ENCODE measurements at regions of chr9 and their contacts with region 1.

Region 1: GRCh38 chr9:13427587-13427986 is 148.1 kb upstream of the MPDZ start:
- DNase-seq: no peak
- ATAC-seq: no peak

Region 2: DNA sequence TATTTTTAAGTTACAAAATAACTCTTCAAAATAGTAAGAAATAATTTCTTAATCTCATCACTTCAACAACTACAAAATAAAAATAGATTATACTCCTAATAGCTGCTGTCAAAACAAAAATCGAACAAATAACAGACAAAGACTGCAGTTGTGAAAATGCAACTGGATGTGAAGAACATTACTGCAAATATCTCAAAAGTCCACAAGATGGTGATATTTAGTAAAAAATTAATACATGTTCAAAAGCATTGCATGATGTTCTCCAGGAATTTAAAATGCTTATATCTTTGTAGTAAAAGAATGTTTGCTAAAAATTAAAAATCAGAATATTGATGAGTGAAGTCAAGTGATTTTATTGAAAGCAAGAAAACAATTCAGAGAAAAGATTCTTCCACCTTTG is 214.2 kb before region 1 on chr9:
- intact Hi-C with region 1: loop called (anchors 10 kb)
- DNase-seq: no peak
- ATAC-seq: no peak

Region 3: DNA sequence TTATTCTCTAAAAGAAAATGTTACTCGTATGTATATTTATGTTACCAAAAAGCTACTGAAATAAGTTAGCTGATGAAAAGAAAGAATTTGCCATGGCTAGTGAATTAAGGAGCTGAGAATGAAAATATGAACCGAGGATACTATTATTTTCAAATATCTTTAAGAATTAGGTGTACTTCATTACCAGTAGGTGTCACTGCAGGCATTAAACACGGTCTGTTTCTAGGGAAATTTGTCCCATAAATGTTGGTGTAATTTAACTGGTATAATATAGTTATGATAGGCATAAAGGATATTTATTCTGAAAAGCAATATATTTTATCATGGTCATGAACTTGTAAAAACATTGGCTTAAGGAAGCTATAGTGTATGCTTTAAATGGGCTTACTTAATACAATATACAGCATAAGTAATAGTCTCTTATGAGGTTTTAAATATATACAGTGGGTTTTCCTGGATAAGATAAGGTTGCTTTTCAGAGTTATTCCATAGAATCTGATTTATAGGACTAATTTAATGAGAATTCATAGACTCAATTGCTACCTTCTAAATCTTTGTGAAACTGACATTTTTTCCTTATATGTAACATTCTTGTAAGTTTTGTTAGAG is 75.7 kb before region 1 on chr9:
- intact Hi-C with region 1: loop called (anchors 10 kb)
- DNase-seq: no peak
- ATAC-seq: no peak

Region 4: GRCh38 chr9:13688994-13689600 is 261.5 kb after region 1 on chr9:
- intact Hi-C with region 1: loop called (anchors 5 kb)
- DNase-seq: no peak
- ATAC-seq: no peak

Region 5: DNA sequence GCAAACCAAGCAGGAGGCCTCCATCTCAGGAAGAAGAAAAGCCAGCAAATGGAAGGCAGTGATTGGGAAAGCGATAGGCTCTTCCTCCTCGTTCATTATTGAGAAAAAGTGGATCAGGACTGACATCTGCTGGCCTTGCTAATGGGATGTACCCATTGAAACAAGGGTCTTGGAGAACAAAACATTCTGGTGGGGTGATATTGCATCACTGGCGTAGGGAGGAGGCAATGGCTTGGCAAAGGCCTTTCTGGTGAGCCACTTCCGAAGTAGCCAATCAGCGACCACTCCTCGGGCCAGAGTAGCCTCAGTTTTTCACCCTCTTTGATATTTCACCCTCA is 973.0 kb after region 1 on chr9:
- intact Hi-C with region 1: loop called (anchors 5 kb)
- DNase-seq: no peak
- ATAC-seq: peak; percentile 88

Region 6: GRCh38 chr9:14428781-14429230 is 1001.2 kb after region 1 on chr9:
- intact Hi-C with region 1: loop called (anchors 2 kb)
- DNase-seq: peak; percentile 55
- ATAC-seq: peak; percentile 84

Measured in Right ventricle myocardium inferior (tissue), 1 donor.